OCI-LY7 (cell line): ENCODE measurements at regions of chr1 and their contacts with region 1.

Region 1: DNA sequence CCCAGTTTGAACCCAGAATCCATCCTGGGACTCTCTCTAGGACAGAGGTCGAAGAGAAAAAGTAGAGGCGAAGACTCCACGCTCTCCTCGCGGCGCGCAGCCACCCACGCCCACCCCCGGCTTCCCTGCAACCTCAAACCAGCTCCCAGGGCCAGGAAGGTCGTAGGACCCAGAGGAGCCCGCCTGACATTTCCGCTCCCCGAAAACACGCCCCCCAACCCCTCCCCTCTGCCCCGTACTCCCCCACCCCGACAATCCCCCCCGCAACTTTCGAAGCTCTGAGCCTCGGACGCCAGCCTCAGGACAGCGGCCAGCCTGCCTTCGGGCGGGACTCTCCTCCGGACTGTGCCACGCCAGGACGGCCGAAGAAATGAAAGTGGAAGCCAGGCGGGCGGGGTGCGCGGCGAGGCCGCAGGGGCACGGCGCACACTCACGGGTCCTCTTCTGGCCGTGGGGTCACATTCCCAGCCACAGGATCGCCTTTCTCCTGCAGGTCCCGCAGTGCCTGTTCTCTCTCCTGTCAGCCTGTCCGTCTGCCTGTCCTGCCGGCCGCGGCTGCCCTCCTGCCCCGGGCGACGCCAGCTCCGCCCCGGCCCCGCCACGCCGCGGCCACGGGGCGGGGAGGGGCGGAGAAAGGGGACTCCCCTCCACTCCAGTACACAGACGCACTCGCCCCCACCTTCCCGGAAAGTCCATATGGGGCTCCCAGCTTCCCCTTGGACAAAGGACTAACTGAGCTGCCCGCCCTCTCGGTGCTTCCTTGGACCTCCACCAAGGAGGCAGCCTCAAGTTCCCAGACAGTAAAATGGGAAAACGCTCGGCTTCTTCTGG is at the start of gene MOB3C:
- DNase-seq: peak; percentile 57
- H3K4me3 ChIP-seq: peak within 1 kb of the TSS; percentile 79
- H3K27ac ChIP-seq: no peak within 1 kb of the TSS
- H3K4me1 ChIP-seq: peaks cover 17% of the 10 kb centered on the region
- CTCF ChIP-seq: no peak
- total RNA-seq, gene MOB3C: 2.0 and 2.7 TPM in 2 replicates

Region 2: GRCh38 chr1:46603858-46604549 is 12.5 kb before region 1 on chr1 and contains the start of gene MKNK1:
- CTCF ChIA-PET with region 1: interaction called, 4 read pairs
- POLR2A ChIA-PET with region 1: interaction called, 62 read pairs
- intact Hi-C with region 1: no loop called
- DNase-seq: peak; percentile 96
- H3K4me3 ChIP-seq: peak within 1 kb of the TSS; percentile 79
- H3K27ac ChIP-seq: no peak within 1 kb of the TSS
- H3K4me1 ChIP-seq: peaks cover 12% of the 10 kb centered on the region
- CTCF ChIP-seq: peak; percentile 18; the same call in 1 of the 2 replicates
- total RNA-seq, gene MKNK1: 11.5 and 18.8 TPM in 2 replicates

Region 3: DNA sequence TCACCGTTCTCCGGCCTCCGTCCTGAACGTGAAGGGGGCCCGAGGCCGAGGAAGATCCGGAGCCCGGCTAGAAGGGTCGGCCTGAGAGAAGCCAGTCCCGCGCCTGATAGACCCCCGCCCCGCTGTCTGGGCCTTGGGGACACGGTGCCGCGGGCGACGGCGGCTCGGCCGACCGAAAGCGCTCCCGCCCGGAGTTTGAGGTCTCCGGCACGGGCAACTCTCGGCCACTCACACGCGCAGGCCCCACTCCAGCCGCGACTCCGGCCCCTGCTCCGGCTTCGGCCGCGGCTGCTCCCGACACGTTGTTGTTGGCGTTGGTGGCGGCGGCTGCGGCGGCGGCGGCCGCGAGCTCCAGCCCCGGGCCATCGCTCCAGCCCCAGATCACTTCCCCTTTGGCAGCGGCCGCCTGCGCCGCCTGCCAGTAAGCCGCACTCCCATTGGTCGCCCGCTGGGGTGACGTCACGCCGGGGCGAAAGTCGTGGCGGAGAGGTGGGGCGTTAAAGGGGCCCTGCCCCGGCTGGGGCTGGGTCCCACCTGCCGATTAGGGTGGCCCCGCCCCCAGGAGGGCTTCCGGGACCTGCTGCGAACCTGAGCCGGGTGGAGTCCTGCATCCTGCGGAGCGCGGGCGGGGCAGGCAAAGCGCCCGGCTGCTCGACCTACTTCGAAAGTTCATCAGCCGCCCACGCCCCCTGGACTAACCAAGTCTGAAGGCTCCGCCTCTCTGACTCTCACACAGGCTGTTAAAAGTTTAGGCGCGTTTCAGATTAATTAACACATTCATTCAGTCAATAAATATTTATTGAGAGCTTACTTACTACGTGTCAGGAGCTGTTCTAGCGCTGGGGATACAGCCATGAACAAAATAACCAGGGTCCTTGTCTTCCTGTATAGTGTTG is 102.5 kb after region 1 on chr1 and contains the start of gene EFCAB14:
- CTCF ChIA-PET with region 1: interaction called, 3 read pairs
- POLR2A ChIA-PET with region 1: interaction called, 3 read pairs
- intact Hi-C with region 1: loop called (anchors 1 kb)
- DNase-seq: peak; percentile 99
- H3K4me3 ChIP-seq: peak within 1 kb of the TSS; percentile 77
- H3K27ac ChIP-seq: peak within 1 kb of the TSS; percentile 12
- H3K4me1 ChIP-seq: peaks cover 26% of the 10 kb centered on the region
- CTCF ChIP-seq: no peak
- total RNA-seq, gene EFCAB14: 24.8 and 29.9 TPM in 2 replicates

Region 4: GRCh38 chr1:47023302-47024140 is 407.0 kb after region 1 on chr1 and contains the start of gene CYP4X1:
- CTCF ChIA-PET with region 1: no interaction called
- POLR2A ChIA-PET with region 1: no interaction called
- intact Hi-C with region 1: no loop called
- DNase-seq: no peak
- H3K4me3 ChIP-seq: no peak within 1 kb of the TSS
- H3K27ac ChIP-seq: no peak within 1 kb of the TSS
- H3K4me1 ChIP-seq: no peaks in the 10 kb centered on the region
- CTCF ChIP-seq: no peak
- total RNA-seq, gene CYP4X1: not detected in 2 replicates